ENCODE measurements at regions of chr11 and their contacts with region 1.

Region 1: GRCh38 chr11:114141863-114142580 is 82.5 kb downstream of the ZBTB16 start:
- DNase-seq: no peak
- H3K4me3 ChIP-seq: no peak overlapping the region
- CTCF ChIP-seq: no peak

Region 2: DNA sequence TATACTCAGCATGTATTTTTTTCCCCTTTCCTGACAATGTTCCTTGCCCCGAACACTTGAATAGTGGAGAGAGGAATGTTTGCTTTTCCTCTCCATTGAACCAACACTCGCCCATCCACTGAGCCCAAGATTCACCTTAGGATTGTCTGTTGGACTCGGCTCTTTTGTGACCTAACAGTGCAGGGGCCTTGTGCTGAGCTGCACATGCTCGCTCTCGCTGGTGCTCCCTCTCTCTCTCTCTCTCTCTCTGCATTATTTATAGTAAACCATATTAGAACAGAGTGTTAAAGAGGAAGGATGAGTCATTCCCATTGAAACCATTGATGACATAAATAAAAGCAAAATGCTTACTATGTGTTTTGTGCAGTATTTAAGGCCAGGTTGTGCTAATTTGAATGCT is 61.8 kb before region 1 on chr11:
- in situ Hi-C with region 1: loop called (anchors 5 kb)
- DNase-seq: peak; percentile 39
- H3K4me3 ChIP-seq: no peak overlapping the region
- CTCF ChIP-seq: no peak

Region 3: DNA sequence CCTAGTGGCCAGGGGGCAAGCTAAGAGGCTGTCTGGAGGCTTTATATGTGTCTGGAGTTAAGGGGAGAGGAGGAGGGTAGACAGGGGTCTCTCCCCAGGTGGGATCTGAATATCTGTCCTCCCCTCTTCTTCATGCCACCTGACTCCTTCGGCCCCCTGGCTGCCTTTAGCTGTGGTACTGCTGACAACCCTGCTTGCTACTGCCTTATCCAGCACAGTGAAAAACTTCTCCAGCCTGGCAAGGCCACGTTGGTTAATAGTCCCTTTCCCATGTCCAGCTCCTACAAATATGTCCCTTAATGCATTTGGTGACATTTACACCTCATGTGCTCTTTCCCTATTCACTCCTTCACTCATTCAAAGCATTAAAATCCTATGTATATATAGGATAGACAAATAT is 111.7 kb after region 1 on chr11:
- in situ Hi-C with region 1: no loop called
- DNase-seq: no peak
- H3K4me3 ChIP-seq: no peak overlapping the region
- CTCF ChIP-seq: peak; percentile 6